Heart right ventricle (tissue), 16 donors: ENCODE measurements at regions of chr15 and their contacts with region 1.

Region 1: DNA sequence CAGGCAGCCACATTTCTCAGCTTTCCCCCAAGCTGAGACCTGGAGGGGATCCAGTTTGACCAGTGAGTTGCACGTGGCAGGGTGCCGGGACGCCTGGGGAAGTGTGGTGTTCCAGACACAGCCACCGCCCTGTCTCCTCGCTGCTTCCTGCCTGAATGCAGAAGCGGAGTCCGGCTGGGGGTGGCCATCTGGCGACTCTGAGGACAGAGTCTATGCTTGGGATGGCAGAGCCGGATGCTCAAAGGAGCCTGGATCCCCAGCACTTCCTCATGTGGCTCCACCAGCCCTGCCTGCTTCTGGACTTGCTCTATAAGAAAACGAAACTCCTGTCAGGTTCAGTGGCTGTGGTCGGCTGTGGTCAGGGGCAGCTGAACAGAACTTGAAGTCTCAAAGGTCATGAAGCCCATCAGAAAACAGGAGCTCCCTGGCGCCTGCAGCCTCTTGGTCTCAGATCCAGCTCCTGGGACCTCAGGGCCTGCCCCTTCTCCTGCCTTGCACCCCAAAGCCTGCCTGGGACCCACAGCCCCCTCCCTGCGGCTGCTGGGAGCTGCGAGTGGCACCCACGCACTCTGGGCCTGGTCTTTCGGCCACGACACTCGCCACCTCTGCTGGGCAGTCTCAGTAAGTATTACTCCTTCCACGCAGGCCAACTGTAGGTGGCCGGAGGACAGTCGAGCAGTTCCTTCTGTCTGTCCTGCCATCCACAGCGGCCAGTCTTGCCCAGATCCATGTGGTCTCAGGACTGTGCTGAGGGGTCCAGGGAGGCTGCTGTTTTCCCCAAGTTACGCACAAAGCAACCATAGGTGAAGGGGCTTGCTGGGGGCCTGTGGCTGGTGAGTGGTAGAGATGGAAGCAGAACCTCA is 112.8 kb upstream of the MEF2A start:
- DNase-seq: peak; percentile 90 to 92
- ATAC-seq: peak; percentile 50 to 75 (median 64)
- H3K4me3 ChIP-seq: peak overlapping the region in 5 of 10 donors; percentile 6 to 15 (median 11)
- H3K27ac ChIP-seq: peak overlapping the region; percentile 84 to 99 (median 94)
- H3K4me1 ChIP-seq: peaks cover 50 to 86% (median 69%) of the 10 kb centered on the region in 9 donors
- H3K27me3 ChIP-seq: no peaks in the 10 kb centered on the region
- CTCF ChIP-seq: no peak

Region 2: GRCh38 chr15:98076021-98076816 is 1376.8 kb before region 1 on chr15:
- intact Hi-C with region 1: no loop called
- DNase-seq: peak; percentile 28 to 36
- ATAC-seq: peak; percentile 72 to 93 (median 91)
- H3K4me3 ChIP-seq: no peak overlapping the region
- H3K27ac ChIP-seq: peak overlapping the region in 7 of 10 donors; percentile 22 to 83 (median 59)
- H3K4me1 ChIP-seq: peaks cover 0 to 27% (median 12%) of the 10 kb centered on the region in 9 donors
- H3K27me3 ChIP-seq: no peaks in the 10 kb centered on the region
- CTCF ChIP-seq: no peak

Region 3: GRCh38 chr15:99385865-99386264 is 67.1 kb before region 1 on chr15:
- intact Hi-C with region 1: no loop called
- DNase-seq: peak; percentile 74 to 81
- ATAC-seq: peak; percentile 76 to 96 (median 94)
- H3K4me3 ChIP-seq: no peak overlapping the region
- H3K27ac ChIP-seq: peak overlapping the region in 6 of 10 donors; percentile 0 to 77 (median 36)
- H3K4me1 ChIP-seq: peaks cover 0 to 22% (median 17%) of the 10 kb centered on the region in 9 donors
- H3K27me3 ChIP-seq: no peaks in the 10 kb centered on the region
- CTCF ChIP-seq: peak in 3 of 9 donors; percentile 13 to 25 (median 21)

Region 4: DNA sequence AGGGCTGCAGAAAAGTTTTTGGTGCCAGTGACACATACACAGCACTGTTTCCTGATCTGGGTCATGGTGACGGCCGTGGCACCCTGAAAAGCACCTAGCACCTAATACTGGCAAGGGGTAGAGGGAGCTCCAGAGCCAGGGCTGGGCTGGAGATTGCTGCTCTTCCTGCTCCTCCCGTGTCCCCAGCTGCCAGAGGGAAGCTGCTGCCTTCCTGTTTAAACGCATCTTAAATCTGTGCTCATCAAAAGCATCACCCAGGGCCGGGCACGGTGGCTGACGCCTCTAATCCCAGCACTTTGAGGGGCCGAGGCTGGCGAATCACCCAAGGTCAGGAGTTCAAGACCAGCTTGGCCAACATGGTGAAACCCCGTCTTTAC is 43.9 kb before region 1 on chr15:
- intact Hi-C with region 1: loop called in 1 of 10 experiments (anchors 5 kb)
- DNase-seq: peak; percentile 69 to 70
- ATAC-seq: peak; percentile 82 to 94 (median 90)
- H3K4me3 ChIP-seq: no peak overlapping the region
- H3K27ac ChIP-seq: peak overlapping the region; percentile 1 to 68 (median 52)
- H3K4me1 ChIP-seq: peaks cover 14 to 27% (median 22%) of the 10 kb centered on the region in 9 donors
- H3K27me3 ChIP-seq: no peaks in the 10 kb centered on the region
- CTCF ChIP-seq: peak; percentile 34 to 79 (median 65)

Region 5: GRCh38 chr15:99433034-99433756 is 19.8 kb before region 1 on chr15:
- intact Hi-C with region 1: loop called in 1 of 10 experiments (anchors 2 kb)
- DNase-seq: peak in 1 of 2 donors; percentile 60
- ATAC-seq: peak; percentile 44 to 78 (median 60)
- H3K4me3 ChIP-seq: no peak overlapping the region
- H3K27ac ChIP-seq: peak overlapping the region in 9 of 10 donors; percentile 56 to 81 (median 72)
- H3K4me1 ChIP-seq: peaks cover 22 to 65% (median 53%) of the 10 kb centered on the region in 9 donors
- H3K27me3 ChIP-seq: no peaks in the 10 kb centered on the region
- CTCF ChIP-seq: peak in 1 of 9 donors; percentile 13

Region 6: GRCh38 chr15:99473981-99474906 is 21.2 kb after region 1 on chr15:
- intact Hi-C with region 1: loop called in 1 of 10 experiments (anchors 2 kb)
- DNase-seq: peak; percentile 63 to 75
- ATAC-seq: peak; percentile 70 to 91 (median 83)
- H3K4me3 ChIP-seq: peak overlapping the region in 6 of 10 donors; percentile 4 to 30 (median 24)
- H3K27ac ChIP-seq: peak overlapping the region; percentile 38 to 94 (median 83)
- H3K4me1 ChIP-seq: peaks cover 14 to 65% (median 60%) of the 10 kb centered on the region in 9 donors
- H3K27me3 ChIP-seq: no peaks in the 10 kb centered on the region
- CTCF ChIP-seq: no peak

Region 7: GRCh38 chr15:99502182-99502581 is 49.2 kb after region 1 on chr15:
- intact Hi-C with region 1: loop called in 4 of 10 experiments (anchors 2 to 5 kb)
- DNase-seq: no peak
- ATAC-seq: no peak
- H3K4me3 ChIP-seq: no peak overlapping the region
- H3K27ac ChIP-seq: no peak overlapping the region
- H3K4me1 ChIP-seq: peaks cover 3 to 40% (median 32%) of the 10 kb centered on the region in 9 donors
- H3K27me3 ChIP-seq: no peaks in the 10 kb centered on the region
- CTCF ChIP-seq: no peak

Region 8: GRCh38 chr15:99507504-99508310 is 54.7 kb after region 1 on chr15:
- intact Hi-C with region 1: loop called in 4 of 10 experiments (anchors 2 to 5 kb)
- DNase-seq: peak; percentile 71 to 82
- ATAC-seq: peak; percentile 78 to 92 (median 86)
- H3K4me3 ChIP-seq: peak overlapping the region in 2 of 10 donors; percentile 5 to 21
- H3K27ac ChIP-seq: peak overlapping the region; percentile 9 to 91 (median 80)
- H3K4me1 ChIP-seq: peaks cover 3 to 93% (median 74%) of the 10 kb centered on the region in 9 donors
- H3K27me3 ChIP-seq: no peaks in the 10 kb centered on the region
- CTCF ChIP-seq: no peak